ENCODE measurements at regions of chr17 and their contacts with region 1.

Region 1: DNA sequence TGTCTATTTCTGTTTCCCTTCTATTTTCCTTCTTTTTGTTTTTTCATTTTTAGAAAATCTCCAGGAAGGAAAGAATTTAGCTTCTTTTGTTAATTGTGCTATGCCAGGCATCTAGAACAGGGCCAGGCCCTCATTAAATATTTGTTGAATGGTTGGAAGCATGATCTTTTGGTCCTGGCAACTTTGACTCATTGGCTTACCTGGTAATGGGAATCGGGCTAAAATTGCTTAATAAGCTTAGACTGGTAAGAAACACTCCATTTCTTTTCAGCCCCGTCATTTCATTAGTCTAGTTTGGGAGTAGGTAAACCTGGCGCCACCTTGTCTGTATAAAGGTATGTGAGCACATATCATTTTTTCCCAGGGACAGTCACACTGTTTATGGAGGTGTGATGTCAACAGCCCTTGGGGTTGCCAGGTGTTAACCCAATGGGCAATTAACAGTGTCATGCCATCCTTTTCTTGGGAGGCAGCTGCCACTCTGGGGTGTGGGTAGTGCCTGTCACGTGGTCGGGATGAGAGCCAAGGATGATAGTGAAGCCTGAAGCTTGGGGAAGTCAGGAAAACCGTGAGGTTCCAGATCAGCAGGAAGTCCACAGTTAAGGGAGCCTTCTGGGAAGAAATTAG is 9.5 kb upstream of the NDEL1 start:
- DNase-seq: no peak
- H3K4me3 ChIP-seq: no peak overlapping the region
- H3K27ac ChIP-seq: no peak overlapping the region
- H3K4me1 ChIP-seq: peaks cover 2% of the 10 kb centered on the region
- H3K27me3 ChIP-seq: no peaks in the 10 kb centered on the region
- CTCF ChIP-seq: no peak

Region 2: GRCh38 chr17:8376271-8377067 is 49.7 kb before region 1 on chr17 and contains the start of gene KRABD2:
- CTCF ChIA-PET with region 1: no interaction called
- dilution Hi-C with region 1: loop called (anchors 5 kb)
- in situ Hi-C with region 1: no loop called
- intact Hi-C with region 1: loop called (anchors 5 kb)
- DNase-seq: peak; percentile 75
- H3K4me3 ChIP-seq: peak within 1 kb of the TSS; percentile 52 to 82 (median 53)
- H3K27ac ChIP-seq: no peak within 1 kb of the TSS
- H3K4me1 ChIP-seq: peaks cover 32% of the 10 kb centered on the region
- H3K27me3 ChIP-seq: no peaks in the 10 kb centered on the region
- CTCF ChIP-seq: peak; percentile 43 to 66

Region 3: GRCh38 chr17:8581002-8581658 is 154.9 kb after region 1 on chr17:
- CTCF ChIA-PET with region 1: no interaction called
- dilution Hi-C with region 1: no loop called
- in situ Hi-C with region 1: no loop called
- intact Hi-C with region 1: no loop called
- DNase-seq: peak; percentile 85
- H3K4me3 ChIP-seq: no peak overlapping the region
- H3K27ac ChIP-seq: peak overlapping the region; percentile 72
- H3K4me1 ChIP-seq: peaks cover 24% of the 10 kb centered on the region
- H3K27me3 ChIP-seq: no peaks in the 10 kb centered on the region
- CTCF ChIP-seq: no peak

Measured in mammary epithelial cell (primary cell).